Activated CD4-positive, alpha-beta T cell treated with anti-CD3 and anti-CD28 coated beads for 36 hours (primary cell): ENCODE measurements at regions of chr17 and their contacts with region 1.

Region 1: DNA sequence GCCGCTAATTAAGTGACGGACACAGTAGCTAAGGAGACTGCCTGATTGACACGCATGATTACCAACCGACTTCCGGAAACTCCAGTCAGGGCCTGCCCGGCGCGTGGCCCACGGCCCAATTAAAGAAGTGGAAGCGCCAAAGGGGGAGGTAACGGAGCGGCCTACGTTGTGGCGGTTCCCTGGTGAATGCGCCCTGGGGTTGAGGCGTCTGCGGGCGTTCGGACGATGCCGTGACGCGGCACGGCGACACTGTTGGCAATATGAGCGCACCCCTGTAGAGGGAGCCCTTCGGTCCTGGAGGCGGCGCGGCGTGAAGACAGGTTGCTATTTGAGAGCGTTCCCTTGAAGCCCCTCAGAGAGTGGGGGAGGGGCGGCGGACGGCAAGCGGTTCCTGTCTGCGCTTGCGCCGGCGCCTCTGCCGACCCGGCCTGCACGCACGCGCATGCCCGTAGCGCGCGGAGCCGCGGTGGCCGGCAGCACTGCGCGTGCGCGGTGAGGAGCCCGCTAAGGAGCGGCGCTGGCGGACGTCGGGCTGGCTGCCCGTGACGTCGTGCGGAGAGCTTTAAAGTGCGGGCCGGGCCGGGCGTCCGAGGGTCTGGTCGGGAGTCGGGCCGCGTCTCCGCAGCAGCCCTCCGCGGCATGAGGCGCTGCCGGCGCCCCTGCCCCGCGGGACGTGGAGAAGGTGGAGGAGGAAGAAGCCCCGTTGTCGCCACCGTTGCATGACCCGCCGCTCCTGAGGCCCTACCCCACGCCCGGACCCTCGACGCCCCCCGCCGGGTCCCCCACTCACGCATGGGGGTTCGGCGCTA is at the start of gene ALKBH5:
- DNase-seq: peak; percentile 98
- ATAC-seq: peak; percentile 84
- H3K4me3 Mint-ChIP-seq: peak within 1 kb of the TSS; percentile 97
- H3K27ac Mint-ChIP-seq: peak within 1 kb of the TSS; percentile 94
- H3K4me1 Mint-ChIP-seq: peaks cover 45% of the 10 kb centered on the region
- H3K27me3 Mint-ChIP-seq: no peaks in the 10 kb centered on the region
- total RNA-seq, gene ALKBH5: 163 to 168 TPM

Region 2: DNA sequence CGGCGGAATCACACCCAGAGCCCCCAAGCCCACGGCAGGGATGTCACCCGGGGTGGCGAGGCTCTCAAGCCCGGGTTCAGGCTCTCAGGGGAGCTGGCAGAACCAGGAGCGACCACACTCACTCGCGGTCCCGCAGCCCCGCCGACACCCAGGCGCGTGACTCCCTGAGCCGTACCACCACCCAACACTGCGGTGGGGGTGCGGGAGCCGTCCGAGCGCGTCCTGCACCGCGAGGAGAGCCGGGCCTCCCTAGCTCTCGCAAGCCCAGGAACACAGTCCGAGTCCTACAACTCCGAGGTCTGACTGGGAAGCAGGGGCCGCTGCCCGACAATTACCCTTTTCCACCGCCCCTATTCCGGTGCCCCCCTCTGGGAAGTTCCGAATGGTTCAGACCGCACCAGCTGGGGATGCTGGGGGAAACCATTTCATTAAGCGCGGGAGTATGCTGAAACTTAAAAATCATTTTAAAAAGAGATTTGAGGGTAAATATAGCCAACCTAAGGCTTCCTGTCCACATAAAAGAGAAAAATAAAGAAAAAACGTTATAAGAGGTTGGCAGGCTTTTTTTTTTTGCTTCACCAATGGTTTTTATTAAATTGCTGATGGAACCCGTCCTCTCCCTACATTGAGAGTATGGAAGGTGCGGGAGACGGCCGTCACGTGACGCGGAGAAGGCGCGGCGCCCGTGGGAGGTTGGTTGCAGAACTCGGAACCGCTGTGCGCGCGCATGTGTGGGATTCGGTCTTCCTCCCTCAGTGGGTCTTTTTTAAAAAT is 946.3 kb before region 1 on chr17 and contains the start of gene FLCN:
- CTCF ChIA-PET with region 1: no interaction called
- POLR2A ChIA-PET with region 1: no interaction called
- intact Hi-C with region 1: loop called in 1 of 2 experiments (anchors 1 kb)
- DNase-seq: peak; percentile 93
- ATAC-seq: peak; percentile 90
- H3K4me3 Mint-ChIP-seq: peak within 1 kb of the TSS; percentile 81
- H3K27ac Mint-ChIP-seq: peak within 1 kb of the TSS; percentile 98
- H3K4me1 Mint-ChIP-seq: peaks cover 31% of the 10 kb centered on the region
- H3K27me3 Mint-ChIP-seq: no peaks in the 10 kb centered on the region
- total RNA-seq, gene FLCN: 12.3 to 18.8 TPM

Region 3: DNA sequence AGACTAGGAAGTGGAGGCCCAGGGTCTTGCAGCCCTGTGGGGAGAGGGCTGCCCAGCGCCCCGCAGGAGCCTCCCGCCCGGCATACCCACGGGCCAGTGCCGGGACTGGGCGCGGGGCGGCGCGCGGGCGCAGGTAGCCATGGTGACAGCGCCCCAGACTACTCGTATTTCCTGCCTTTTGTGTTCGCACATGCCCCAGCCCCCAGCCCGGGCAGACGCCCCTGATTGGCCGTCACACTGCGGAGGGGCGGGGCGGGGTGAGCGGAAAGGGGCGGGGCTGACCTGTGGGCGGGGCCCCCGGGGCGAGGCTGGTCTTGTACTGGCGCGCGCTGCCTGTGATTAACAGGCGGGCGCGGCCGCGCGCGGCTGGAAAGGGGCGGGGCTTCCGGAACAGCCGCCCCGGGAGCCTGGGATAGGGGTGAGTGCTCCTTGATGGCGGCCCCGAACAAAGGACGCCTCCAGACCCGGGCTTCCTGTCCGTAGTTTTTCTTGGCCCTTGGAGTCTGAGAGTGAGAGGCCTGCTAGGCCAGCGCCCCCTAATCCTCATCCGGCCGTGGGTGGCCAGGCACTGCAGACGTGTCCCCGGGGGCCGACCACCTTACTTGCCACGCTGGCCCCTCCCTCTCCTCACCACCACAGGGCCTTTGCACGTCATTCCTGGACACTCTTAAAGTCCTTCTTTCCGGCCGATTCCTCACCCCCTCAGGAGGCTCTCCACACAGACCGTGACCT is 431.3 kb before region 1 on chr17:
- CTCF ChIA-PET with region 1: no interaction called
- POLR2A ChIA-PET with region 1: no interaction called
- intact Hi-C with region 1: loop called in 1 of 2 experiments (anchors 1 kb)
- DNase-seq: peak; percentile 99
- ATAC-seq: peak; percentile 89
- H3K4me3 Mint-ChIP-seq: peak overlapping the region; percentile 85
- H3K27ac Mint-ChIP-seq: peak overlapping the region; percentile 99
- H3K4me1 Mint-ChIP-seq: peaks cover 68% of the 10 kb centered on the region
- H3K27me3 Mint-ChIP-seq: no peaks in the 10 kb centered on the region

Region 4: GRCh38 chr17:17972126-17972951 is 211.2 kb before region 1 on chr17 and contains the starts of genes DRC3 and TOM1L2:
- CTCF ChIA-PET with region 1: no interaction called
- POLR2A ChIA-PET with region 1: no interaction called
- intact Hi-C with region 1: loop called in 1 of 2 experiments (anchors 1 kb)
- DNase-seq: peak; percentile 100
- ATAC-seq: peak; percentile 97
- H3K4me3 Mint-ChIP-seq: peak within 1 kb of the TSS; percentile 86
- H3K27ac Mint-ChIP-seq: peak within 1 kb of the TSS; percentile 76
- H3K4me1 Mint-ChIP-seq: peaks cover 37% of the 10 kb centered on the region
- H3K27me3 Mint-ChIP-seq: no peaks in the 10 kb centered on the region
- total RNA-seq, gene DRC3: 0.11 to 0.18 TPM
- total RNA-seq, gene TOM1L2: 11.3 to 11.9 TPM

Region 5: GRCh38 chr17:18158022-18158600 is 25.4 kb before region 1 on chr17:
- CTCF ChIA-PET with region 1: interaction called, 4 read pairs
- POLR2A ChIA-PET with region 1: interaction called, 4 read pairs
- intact Hi-C with region 1: loop called (anchors 1 to 2 kb)
- DNase-seq: peak; percentile 99
- ATAC-seq: peak; percentile 87
- H3K4me3 Mint-ChIP-seq: peak overlapping the region; percentile 63
- H3K27ac Mint-ChIP-seq: peak overlapping the region; percentile 81
- H3K4me1 Mint-ChIP-seq: peaks cover 9% of the 10 kb centered on the region
- H3K27me3 Mint-ChIP-seq: no peaks in the 10 kb centered on the region

Region 6: DNA sequence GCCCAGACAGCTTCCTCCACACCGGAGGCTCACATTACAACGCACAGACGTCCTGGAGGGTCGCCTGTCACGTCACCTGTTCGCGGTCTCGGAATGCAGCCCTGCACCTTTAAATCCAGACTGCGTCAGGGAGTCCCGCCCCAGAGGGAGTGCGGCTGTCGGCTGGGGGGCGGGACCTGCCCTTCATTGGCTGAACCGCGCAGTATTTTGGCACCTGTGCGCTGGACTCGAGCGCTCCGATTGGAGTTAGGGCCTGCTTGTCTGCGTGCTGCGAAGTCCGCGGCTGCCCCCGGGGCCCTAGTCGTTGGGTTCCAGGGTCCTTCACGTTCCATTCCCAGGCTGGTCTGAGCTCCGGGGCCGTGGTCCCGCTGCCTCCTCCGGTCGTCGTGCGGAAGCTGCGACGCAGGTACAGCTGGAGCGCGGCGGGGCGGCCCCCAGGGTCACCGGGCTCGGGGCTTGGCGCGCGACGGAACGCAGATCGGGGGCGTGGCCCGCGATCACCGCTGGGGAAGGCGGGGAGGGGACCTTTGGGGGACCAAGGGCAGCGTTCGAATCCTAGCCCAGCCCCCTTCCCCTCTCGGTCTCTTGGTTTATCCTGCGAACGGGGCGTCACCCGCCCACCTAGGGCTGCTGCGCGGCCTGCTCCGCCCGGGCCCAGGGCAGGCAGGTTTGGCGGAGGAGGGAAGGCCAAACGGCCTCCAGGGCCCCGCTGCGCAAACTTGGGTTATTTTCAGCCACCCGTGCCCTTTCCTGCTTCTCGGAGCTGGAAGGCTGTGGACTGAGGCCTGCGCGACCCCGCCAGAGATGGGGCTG is 77.0 kb after region 1 on chr17 and contains the start of gene MIEF2:
- CTCF ChIA-PET with region 1: interaction called, 3 read pairs
- POLR2A ChIA-PET with region 1: no interaction called
- intact Hi-C with region 1: loop called (anchors 1 to 2 kb)
- DNase-seq: peak; percentile 96
- ATAC-seq: peak; percentile 92
- H3K4me3 Mint-ChIP-seq: peak within 1 kb of the TSS; percentile 76
- H3K27ac Mint-ChIP-seq: peak within 1 kb of the TSS; percentile 80
- H3K4me1 Mint-ChIP-seq: peaks cover 42% of the 10 kb centered on the region
- H3K27me3 Mint-ChIP-seq: no peaks in the 10 kb centered on the region
- total RNA-seq, gene MIEF2: 3.3 to 5.2 TPM

Region 7: DNA sequence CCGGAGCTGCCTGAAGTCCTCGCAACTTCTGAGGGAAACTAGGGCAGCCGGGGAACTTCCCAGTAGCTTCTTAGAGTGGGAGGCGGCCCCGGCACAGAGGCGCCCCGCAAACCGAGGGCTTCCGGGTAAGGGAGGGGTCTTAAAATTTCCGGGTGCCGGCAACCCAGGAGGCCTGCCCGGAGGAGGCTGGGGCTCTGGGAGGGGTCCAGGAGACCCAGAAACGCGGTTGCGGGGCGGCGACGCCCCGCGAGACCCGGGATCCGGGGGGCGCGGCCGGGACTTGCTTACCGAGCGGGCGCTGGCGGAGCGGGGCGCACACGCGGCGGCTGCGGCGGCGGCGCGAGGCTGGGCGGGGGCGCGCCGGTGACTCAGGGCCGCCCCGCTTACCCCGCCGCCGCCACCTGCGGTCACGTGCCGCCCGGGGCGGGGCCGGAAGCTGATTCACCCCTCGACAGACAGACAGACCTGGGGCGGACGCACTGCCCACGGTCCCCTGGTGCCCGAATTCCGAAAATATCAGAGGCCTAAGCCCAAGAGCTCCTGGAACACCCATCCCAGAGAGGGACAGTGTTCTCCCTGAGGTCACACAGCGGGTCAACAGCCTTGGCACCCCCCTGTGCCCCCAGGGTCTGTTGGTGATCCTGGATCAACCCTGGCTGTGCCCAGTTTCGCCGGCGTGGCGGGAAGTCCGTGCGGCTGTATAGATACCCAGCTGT is 821.0 kb after region 1 on chr17 and contains the start of gene FAM83G:
- CTCF ChIA-PET with region 1: no interaction called
- POLR2A ChIA-PET with region 1: no interaction called
- intact Hi-C with region 1: loop called in 1 of 2 experiments (anchors 2 kb)
- DNase-seq: peak; percentile 94
- ATAC-seq: peak; percentile 87
- H3K4me3 Mint-ChIP-seq: peak within 1 kb of the TSS; percentile 88
- H3K27ac Mint-ChIP-seq: peak within 1 kb of the TSS; percentile 89
- H3K4me1 Mint-ChIP-seq: peaks cover 26% of the 10 kb centered on the region
- H3K27me3 Mint-ChIP-seq: no peaks in the 10 kb centered on the region
- total RNA-seq, gene FAM83G: 11.1 to 14.3 TPM